Adrenal gland (tissue), 19 donors: ENCODE measurements at regions of chr12 and their contacts with region 1.

Region 1: DNA sequence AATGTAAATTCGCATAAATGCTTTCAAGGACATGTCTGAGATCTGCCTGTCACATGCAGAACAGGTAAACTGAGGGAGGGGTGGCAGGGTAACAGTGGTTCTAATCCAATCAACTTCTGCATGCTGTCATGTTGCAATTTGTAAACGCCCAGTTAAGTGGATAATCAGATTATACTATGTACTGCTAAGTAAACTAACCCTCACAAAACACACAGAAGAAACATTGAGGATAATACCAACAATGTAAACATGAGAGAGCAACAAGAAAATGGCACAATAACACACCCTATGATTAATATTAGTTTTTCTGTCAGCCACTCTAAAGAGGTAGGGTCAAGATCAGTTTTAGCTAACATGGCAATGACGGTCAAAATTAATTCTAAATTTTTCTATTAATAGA is 123.7 kb downstream of the KIF21A start:
- DNase-seq: no peak
- H3K4me3 ChIP-seq: no peak overlapping the region
- H3K27ac ChIP-seq: no peak overlapping the region
- H3K4me1 ChIP-seq: no peaks in the 10 kb centered on the region
- H3K27me3 ChIP-seq: no peaks in the 10 kb centered on the region
- CTCF ChIP-seq: no peak
- POLR2A ChIP-seq: no peak

Region 2: DNA sequence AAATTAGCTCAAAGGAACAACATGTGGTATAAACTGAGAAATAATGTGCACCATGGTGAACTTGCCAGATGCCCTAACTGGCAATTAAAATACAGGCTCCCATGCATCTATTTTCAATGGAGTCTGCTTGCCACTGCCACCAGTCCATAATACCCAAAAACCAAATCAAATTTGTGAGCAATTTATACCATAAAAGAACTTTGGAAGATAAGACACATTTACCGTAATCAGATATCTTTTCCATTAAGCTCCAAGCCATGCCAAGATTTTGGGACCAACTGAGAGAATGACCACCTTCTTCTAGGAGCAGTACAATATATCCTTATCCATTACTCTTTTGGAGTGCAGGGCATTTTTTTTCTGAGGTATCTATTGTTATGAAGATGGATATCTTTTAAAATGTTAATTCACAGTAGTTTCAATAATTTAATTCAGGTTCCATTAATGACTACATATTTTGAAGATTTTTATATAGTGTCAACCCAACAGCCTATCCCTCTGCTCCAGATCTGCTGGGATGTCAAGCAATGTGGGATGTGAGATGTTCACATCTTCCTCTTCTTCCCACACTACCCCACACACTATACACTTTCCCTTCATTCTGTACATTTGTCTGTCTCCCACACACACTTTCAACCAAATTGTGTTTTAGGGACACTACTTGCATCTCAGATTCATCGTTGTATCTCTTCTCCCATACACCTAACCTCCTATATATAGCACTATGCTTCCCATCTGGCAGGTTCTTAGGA is 70.4 kb after region 1 on chr12:
- intact Hi-C with region 1: no loop called
- DNase-seq: no peak
- H3K4me3 ChIP-seq: no peak overlapping the region
- H3K27ac ChIP-seq: no peak overlapping the region
- H3K4me1 ChIP-seq: no peaks in the 10 kb centered on the region
- H3K27me3 ChIP-seq: no peaks in the 10 kb centered on the region
- CTCF ChIP-seq: no peak
- POLR2A ChIP-seq: no peak

Region 3: DNA sequence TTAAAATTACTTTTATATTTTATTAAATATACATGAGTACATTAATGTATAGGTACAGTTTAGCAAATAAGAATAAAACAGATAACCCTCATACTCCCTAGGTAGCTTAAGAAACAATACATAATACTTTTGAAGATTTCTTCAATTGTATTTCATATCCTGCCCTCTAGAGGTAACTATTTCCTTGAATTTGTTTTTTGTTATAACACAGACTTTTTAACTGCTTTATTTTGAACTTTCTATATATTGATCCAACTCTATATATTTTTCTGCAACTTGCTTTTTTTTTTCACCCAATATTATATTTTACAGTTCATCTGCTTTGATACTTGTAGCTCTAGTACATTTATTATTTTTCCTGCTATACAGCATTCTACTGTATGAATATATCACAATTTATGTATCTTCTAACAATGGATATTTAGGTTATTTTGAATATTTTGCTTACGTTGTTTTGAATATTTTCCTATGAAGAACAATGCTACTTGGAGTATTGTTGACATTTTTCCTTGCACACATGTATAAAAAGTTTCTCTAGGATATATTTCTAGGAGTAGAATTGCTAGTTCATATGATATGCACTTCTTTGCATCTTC is 373.2 kb after region 1 on chr12:
- intact Hi-C with region 1: loop called in 1 of 2 experiments (anchors 10 kb)
- DNase-seq: no peak
- H3K4me3 ChIP-seq: no peak overlapping the region
- H3K27ac ChIP-seq: no peak overlapping the region
- H3K4me1 ChIP-seq: no peaks in the 10 kb centered on the region
- H3K27me3 ChIP-seq: no peaks in the 10 kb centered on the region
- CTCF ChIP-seq: peak in 4 of 6 experiments; percentile 32 to 61 (median 54)
- POLR2A ChIP-seq: no peak

Region 4: DNA sequence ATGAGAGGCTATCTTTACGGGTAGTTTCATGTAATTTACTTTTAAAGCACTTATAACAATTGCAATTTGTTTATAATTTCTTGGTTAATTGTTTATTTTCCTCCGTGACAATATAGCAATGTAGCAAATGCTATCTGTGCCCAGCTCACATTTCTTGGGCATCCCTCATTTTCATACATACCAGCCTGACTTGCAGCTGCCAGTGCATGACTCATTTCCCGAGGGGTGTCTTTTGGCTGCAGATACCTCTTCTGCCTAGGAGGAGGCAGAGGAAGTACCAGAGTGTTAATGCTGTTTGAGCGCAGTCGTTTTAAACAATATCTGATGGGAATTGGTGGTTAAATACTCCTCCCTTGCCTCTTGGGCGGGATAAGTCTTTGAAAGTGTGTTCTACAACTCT is 404.6 kb after region 1 on chr12:
- intact Hi-C with region 1: no loop called
- DNase-seq: no peak
- H3K4me3 ChIP-seq: no peak overlapping the region
- H3K27ac ChIP-seq: no peak overlapping the region
- H3K4me1 ChIP-seq: no peaks in the 10 kb centered on the region
- H3K27me3 ChIP-seq: no peaks in the 10 kb centered on the region
- CTCF ChIP-seq: no peak
- POLR2A ChIP-seq: no peak